GM12878 (cell line): ENCODE measurements at regions of chr11 and their contacts with region 1.

Region 1: GRCh38 chr11:44877571-44878497 is 72.8 kb downstream of the TP53I11 start:
- DNase-seq: no peak
- ATAC-seq: no peak
- H3K4me3 ChIP-seq: no peak overlapping the region
- H3K27ac ChIP-seq: no peak overlapping the region
- H3K4me1 ChIP-seq: no peaks in the 10 kb centered on the region
- H3K27me3 ChIP-seq: no peaks in the 10 kb centered on the region; a peak in 1 of 4 replicates
- CTCF ChIP-seq: no peak
- EP300 ChIP-seq: no peak
- POLR2A ChIP-seq: no peak
- RAD21 ChIP-seq: no peak

Region 2: GRCh38 chr11:44829838-44830237 is 48.0 kb before region 1 on chr11:
- CTCF ChIA-PET with region 1: no interaction called
- POLR2A ChIA-PET with region 1: no interaction called
- RAD21 ChIA-PET with region 1: no interaction called
- SMC1A ChIA-PET with region 1: no interaction called
- in situ Hi-C with region 1: no loop called
- intact Hi-C with region 1: loop called (anchors 5 kb)
- DNase-seq: no peak
- ATAC-seq: no peak
- H3K4me3 ChIP-seq: no peak overlapping the region
- H3K27ac ChIP-seq: no peak overlapping the region
- H3K4me1 ChIP-seq: no peaks in the 10 kb centered on the region
- H3K27me3 ChIP-seq: peaks cover 0 to 4% of the 10 kb centered on the region in 2 experiments; a peak in 2 of 4 replicates
- CTCF ChIP-seq: no peak
- EP300 ChIP-seq: no peak
- POLR2A ChIP-seq: no peak
- RAD21 ChIP-seq: no peak